ENCODE measurements at regions of chr4 and their contacts with region 1.

Region 1: GRCh38 chr4:60039908-60040307 is 1160.2 kb upstream of the ADGRL3 start:
- DNase-seq: no peak
- ATAC-seq: no peak
- H3K4me3 ChIP-seq: no peak overlapping the region
- H3K27ac ChIP-seq: no peak overlapping the region
- H3K4me1 ChIP-seq: no peaks in the 10 kb centered on the region
- H3K27me3 ChIP-seq: no peaks in the 10 kb centered on the region
- CTCF ChIP-seq: no peak
- EP300 ChIP-seq: no peak
- POLR2A ChIP-seq: no peak
- RAD21 ChIP-seq: no peak

Region 2: GRCh38 chr4:60019180-60019579 is 20.7 kb before region 1 on chr4:
- CTCF ChIA-PET with region 1: no interaction called
- POLR2A ChIA-PET with region 1: no interaction called
- in situ Hi-C with region 1: no loop called
- intact Hi-C with region 1: loop called (anchors 1 kb)
- DNase-seq: no peak
- ATAC-seq: no peak
- H3K4me3 ChIP-seq: no peak overlapping the region
- H3K27ac ChIP-seq: no peak overlapping the region
- H3K4me1 ChIP-seq: no peaks in the 10 kb centered on the region
- H3K27me3 ChIP-seq: no peaks in the 10 kb centered on the region
- CTCF ChIP-seq: no peak
- EP300 ChIP-seq: no peak
- POLR2A ChIP-seq: no peak
- RAD21 ChIP-seq: no peak

Region 3: GRCh38 chr4:60081839-60082238 is 41.9 kb after region 1 on chr4:
- CTCF ChIA-PET with region 1: no interaction called
- POLR2A ChIA-PET with region 1: no interaction called
- in situ Hi-C with region 1: no loop called
- intact Hi-C with region 1: no loop called
- DNase-seq: no peak
- ATAC-seq: no peak
- H3K4me3 ChIP-seq: no peak overlapping the region
- H3K27ac ChIP-seq: no peak overlapping the region
- H3K4me1 ChIP-seq: no peaks in the 10 kb centered on the region
- H3K27me3 ChIP-seq: no peaks in the 10 kb centered on the region
- CTCF ChIP-seq: no peak
- EP300 ChIP-seq: no peak
- POLR2A ChIP-seq: no peak
- RAD21 ChIP-seq: no peak

Measured in HepG2 (cell line).